Psoas muscle (tissue), 8 donors: ENCODE measurements at regions of chr6 and their contacts with region 1.

Region 1: DNA sequence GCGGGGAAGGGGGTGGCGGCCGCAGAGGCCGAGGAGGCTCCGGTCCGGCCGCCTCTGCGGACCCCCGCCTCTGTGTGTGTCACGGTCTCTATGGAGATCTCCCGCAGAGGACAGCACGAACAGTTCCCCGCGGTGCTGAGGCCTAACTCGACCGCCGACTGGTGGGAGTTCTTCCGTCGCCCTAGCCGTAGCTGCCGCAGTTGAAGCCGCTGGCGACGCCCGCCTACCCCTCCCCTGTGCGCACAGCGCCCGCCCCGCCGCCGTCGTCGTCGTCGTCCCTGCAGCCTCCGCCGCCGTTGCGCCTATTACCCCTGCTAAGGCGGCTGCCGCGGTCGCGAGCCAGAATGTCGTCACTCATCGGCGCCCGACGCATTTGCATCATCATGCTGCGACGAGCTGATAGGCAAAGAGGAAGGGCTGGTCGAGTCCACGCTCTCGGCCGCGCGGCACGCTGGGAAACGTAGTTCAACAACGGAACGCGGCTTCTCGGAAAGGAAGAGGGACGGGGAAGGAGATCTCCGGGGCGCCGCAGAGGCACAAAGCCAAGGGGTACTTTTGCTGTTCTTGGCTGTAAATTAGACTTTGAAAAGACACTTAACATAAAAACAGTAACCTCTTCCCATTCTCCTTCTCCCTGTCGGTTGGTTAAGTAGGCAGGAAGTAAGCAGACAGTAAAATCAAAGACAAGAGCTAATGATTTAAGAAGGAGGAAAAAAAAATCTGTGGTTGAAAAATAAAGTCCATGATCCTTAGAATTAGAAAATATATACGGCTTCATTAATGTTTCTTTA is at the start of gene NUP153:
- DNase-seq: peak; percentile 98 to 99
- ATAC-seq: peak; percentile 81 to 86 (median 84)
- H3K4me3 ChIP-seq: peak within 1 kb of the TSS; percentile 99
- H3K27ac ChIP-seq: peak within 1 kb of the TSS; percentile 100
- H3K4me1 ChIP-seq: peaks cover 33% of the 10 kb centered on the region
- H3K27me3 ChIP-seq: no peaks in the 10 kb centered on the region
- CTCF ChIP-seq: no peak
- total RNA-seq, gene NUP153: 27.6 to 62.1 (median 39.1) TPM

Region 2: DNA sequence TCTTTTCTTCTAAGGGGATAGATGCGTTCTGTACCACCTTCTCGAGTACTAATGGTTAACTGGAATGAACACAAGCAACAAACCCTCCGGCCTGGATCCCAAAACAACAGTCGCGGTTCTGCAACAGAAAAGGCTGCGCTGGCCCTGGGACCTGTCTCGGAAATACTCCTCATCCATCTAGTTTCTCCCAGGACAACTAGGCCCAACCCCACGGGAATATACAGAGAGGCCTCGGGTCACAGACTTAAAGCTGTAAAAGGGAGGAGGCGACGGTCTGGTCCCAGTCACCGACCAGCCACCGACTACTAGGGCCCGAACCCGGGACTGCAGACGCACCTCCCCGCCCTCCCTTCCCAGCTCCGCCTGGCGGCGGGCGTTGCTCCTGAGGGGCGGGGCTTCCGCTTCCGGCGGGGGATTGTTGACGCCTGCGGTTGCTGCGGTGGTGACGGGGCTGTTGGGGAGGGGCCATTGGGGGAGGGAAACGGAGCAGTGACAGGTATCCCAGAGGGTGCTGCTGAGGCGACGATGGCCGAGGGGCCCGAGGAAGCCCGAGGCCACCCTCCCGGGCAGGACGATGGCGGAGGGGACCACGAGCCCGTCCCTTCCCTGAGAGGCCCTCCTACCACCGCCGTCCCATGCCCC is 106.8 kb before region 1 on chr6 and contains the start of gene FAM8A1:
- intact Hi-C with region 1: loop called in 1 of 2 experiments (anchors 2 kb)
- DNase-seq: peak; percentile 96 to 98
- ATAC-seq: peak; percentile 97 to 98 (median 97)
- H3K4me3 ChIP-seq: peak within 1 kb of the TSS; percentile 90
- H3K27ac ChIP-seq: peak within 1 kb of the TSS; percentile 98
- H3K4me1 ChIP-seq: peaks cover 10% of the 10 kb centered on the region
- H3K27me3 ChIP-seq: no peaks in the 10 kb centered on the region
- CTCF ChIP-seq: peak; percentile 64
- total RNA-seq, gene FAM8A1: 16.4 to 21.6 (median 18.6) TPM

Region 3: DNA sequence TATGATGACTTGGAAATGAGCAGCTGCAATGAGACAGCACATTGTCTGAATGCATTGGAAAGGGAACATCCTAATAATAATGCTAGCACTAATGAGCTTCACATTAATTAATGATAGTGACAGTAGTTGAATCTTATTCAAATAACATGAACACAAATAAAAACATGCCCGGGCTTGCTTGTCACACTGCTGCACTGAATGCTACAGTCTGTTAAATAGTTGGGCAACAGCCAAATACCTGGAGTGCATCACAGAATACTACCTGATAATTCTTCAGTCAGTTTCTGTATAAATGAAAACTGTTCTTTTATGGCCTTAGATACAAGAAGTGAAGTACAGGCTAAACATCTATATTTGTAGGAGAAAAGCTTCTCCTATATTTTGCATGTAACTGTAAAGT is 1139.1 kb after region 1 on chr6:
- intact Hi-C with region 1: no loop called
- DNase-seq: no peak
- ATAC-seq: no peak
- H3K4me3 ChIP-seq: no peak overlapping the region
- H3K27ac ChIP-seq: no peak overlapping the region
- H3K4me1 ChIP-seq: no peaks in the 10 kb centered on the region
- H3K27me3 ChIP-seq: peaks cover 0 to 1% (median 0%) of the 10 kb centered on the region in 3 donors
- CTCF ChIP-seq: no peak